MCF 10A (cell line): ENCODE measurements at regions of chr5 and their contacts with region 1.

Region 1: GRCh38 chr5:67021521-67021920 is 175.1 kb downstream of the CD180 start:
- DNase-seq: peak; percentile 61
- H3K4me3 Mint-ChIP-seq: peak overlapping the region; percentile 12
- H3K27ac Mint-ChIP-seq: peak overlapping the region; percentile 40
- H3K4me1 Mint-ChIP-seq: peaks cover 25% of the 10 kb centered on the region
- H3K27me3 Mint-ChIP-seq: no peaks in the 10 kb centered on the region
- CTCF ChIP-seq: no peak

Region 2: DNA sequence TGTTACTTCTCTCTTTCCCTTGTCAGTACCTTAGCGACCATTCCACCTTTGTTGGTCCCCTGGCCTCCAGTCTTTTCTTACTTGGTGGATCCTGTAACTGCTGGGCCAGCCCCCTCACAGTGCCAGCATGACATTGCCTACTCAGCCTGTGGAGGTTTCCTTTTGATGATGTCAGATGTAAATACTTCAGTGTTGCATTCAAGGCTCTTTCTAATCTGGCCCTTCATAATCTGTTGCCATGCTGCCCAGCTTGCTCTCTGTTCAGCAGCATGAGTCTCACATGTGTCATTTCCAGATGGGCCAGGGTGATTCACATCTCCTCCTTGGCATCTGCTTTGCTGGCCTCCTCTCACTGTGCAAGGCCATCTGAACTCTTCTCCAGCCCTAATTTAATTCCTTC is 368.2 kb before region 1 on chr5:
- CTCF ChIA-PET with region 1: no interaction called
- POLR2A ChIA-PET with region 1: no interaction called
- intact Hi-C with region 1: no loop called
- DNase-seq: peak; percentile 42
- H3K4me3 Mint-ChIP-seq: no peak overlapping the region
- H3K27ac Mint-ChIP-seq: no peak overlapping the region
- H3K4me1 Mint-ChIP-seq: peaks cover 7% of the 10 kb centered on the region
- H3K27me3 Mint-ChIP-seq: no peaks in the 10 kb centered on the region
- CTCF ChIP-seq: no peak

Region 3: GRCh38 chr5:67032921-67033664 is 11.6 kb after region 1 on chr5:
- CTCF ChIA-PET with region 1: interaction called, 3 read pairs
- POLR2A ChIA-PET with region 1: interaction called, 15 read pairs
- intact Hi-C with region 1: no loop called
- DNase-seq: no peak
- H3K4me3 Mint-ChIP-seq: no peak overlapping the region
- H3K27ac Mint-ChIP-seq: no peak overlapping the region
- H3K4me1 Mint-ChIP-seq: peaks cover 48% of the 10 kb centered on the region
- H3K27me3 Mint-ChIP-seq: no peaks in the 10 kb centered on the region
- CTCF ChIP-seq: no peak